ENCODE measurements at regions of chr17 and their contacts with region 1.

Region 1: GRCh38 chr17:14308965-14309879 is 8.3 kb downstream of the HS3ST3B1 start:
- DNase-seq: no peak
- ATAC-seq: peak; percentile 97
- H3K4me3 ChIP-seq: peak overlapping the region; percentile 44 to 60
- H3K27ac ChIP-seq: no peak overlapping the region
- H3K4me1 ChIP-seq: no peaks in the 10 kb centered on the region
- H3K27me3 ChIP-seq: peaks cover 5% of the 10 kb centered on the region; the same call in 1 of the 2 replicates
- CTCF ChIP-seq: no peak

Region 2: DNA sequence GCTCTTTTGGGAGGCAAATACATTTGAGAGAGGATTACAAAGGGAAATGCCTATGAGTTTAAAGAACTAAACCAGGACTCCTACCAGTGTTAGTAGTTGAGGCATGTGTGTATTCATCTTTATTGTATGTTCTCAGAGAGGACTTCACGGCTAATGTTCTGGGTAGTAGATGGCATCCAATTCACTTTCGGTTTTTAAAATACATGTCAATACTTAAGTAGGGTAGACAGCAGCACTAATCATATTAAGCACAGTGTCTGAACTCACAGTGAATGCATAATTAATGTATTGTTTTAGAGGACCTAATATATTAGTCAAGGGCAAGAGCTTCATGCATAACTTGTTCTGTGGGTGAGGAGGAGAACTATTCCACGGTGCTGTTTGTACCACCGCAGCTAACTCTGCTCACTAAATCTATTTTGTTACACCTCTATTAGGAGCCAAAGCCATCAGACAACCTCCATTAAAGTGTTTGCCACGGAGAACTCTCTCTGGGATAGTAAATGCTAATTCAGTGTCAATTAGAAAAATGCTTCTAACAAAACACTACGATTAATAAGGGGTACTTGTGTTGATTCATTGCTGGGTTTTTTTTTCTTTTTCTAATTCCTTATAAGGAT is 183.6 kb before region 1 on chr17:
- CTCF ChIA-PET with region 1: no interaction called
- POLR2A ChIA-PET with region 1: no interaction called
- in situ Hi-C with region 1: no loop called
- intact Hi-C with region 1: no loop called
- DNase-seq: no peak
- ATAC-seq: no peak
- H3K4me3 ChIP-seq: no peak overlapping the region
- H3K27ac ChIP-seq: no peak overlapping the region
- H3K4me1 ChIP-seq: no peaks in the 10 kb centered on the region
- H3K27me3 ChIP-seq: no peaks in the 10 kb centered on the region
- CTCF ChIP-seq: no peak

Region 3: DNA sequence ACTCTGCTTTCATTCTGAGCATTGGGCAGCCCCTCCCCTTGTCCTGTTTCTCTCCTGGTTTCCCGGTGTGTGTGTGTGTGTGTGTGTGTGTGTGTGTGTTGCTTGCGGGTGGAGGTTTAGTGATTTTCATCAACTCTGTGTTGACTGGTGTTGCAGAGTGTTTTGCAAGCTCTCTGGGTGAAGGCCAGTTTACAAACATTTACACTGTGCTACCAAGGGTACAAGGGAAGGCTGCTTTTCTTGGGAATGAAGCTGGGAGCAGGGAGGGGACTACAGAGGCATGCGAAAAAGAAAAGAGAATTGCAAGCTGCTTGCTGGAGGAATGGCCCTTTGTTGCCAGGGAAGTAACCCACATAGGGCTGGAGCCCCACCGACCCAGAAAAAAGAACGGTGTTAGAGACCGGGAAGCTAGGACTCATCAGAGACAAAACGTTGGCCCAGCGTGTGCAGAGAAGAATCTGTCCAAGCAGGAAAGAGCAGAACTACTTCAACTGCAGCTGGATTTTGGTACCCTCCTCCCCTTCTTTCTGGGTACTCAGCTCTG is 21.3 kb after region 1 on chr17:
- CTCF ChIA-PET with region 1: no interaction called
- POLR2A ChIA-PET with region 1: no interaction called
- in situ Hi-C with region 1: no loop called
- intact Hi-C with region 1: no loop called
- DNase-seq: no peak
- ATAC-seq: no peak
- H3K4me3 ChIP-seq: no peak overlapping the region
- H3K27ac ChIP-seq: no peak overlapping the region
- H3K4me1 ChIP-seq: no peaks in the 10 kb centered on the region
- H3K27me3 ChIP-seq: no peaks in the 10 kb centered on the region; the same call in 1 of the 2 replicates
- CTCF ChIP-seq: no peak

Region 4: GRCh38 chr17:14427900-14428647 is 118.9 kb after region 1 on chr17:
- CTCF ChIA-PET with region 1: interaction called, 10 read pairs
- POLR2A ChIA-PET with region 1: no interaction called
- in situ Hi-C with region 1: no loop called
- intact Hi-C with region 1: no loop called
- DNase-seq: no peak
- ATAC-seq: no peak
- H3K4me3 ChIP-seq: no peak overlapping the region
- H3K27ac ChIP-seq: no peak overlapping the region
- H3K4me1 ChIP-seq: no peaks in the 10 kb centered on the region
- H3K27me3 ChIP-seq: no peaks in the 10 kb centered on the region
- CTCF ChIP-seq: no peak